Sigmoid colon (tissue), 7 donors: ENCODE measurements at regions of chr2 and their contacts with region 1.

Region 1: GRCh38 chr2:218781691-218782527 is at the start of gene CYP27A1:
- DNase-seq: peak; percentile 81
- H3K4me3 ChIP-seq: peak within 1 kb of the TSS; percentile 62 to 79 (median 72)
- H3K27ac ChIP-seq: peak within 1 kb of the TSS; percentile 79 to 84 (median 82)
- H3K4me1 ChIP-seq: peaks cover 0 to 27% (median 16%) of the 10 kb centered on the region in 4 donors
- H3K27me3 ChIP-seq: no peaks in the 10 kb centered on the region
- CTCF ChIP-seq: no peak
- EP300 ChIP-seq: no peak
- POLR2A ChIP-seq: peak in 1 of 2 donors; percentile 30
- total RNA-seq, gene CYP27A1: 21.9 to 30.1 (median 25.7) TPM

Region 2: DNA sequence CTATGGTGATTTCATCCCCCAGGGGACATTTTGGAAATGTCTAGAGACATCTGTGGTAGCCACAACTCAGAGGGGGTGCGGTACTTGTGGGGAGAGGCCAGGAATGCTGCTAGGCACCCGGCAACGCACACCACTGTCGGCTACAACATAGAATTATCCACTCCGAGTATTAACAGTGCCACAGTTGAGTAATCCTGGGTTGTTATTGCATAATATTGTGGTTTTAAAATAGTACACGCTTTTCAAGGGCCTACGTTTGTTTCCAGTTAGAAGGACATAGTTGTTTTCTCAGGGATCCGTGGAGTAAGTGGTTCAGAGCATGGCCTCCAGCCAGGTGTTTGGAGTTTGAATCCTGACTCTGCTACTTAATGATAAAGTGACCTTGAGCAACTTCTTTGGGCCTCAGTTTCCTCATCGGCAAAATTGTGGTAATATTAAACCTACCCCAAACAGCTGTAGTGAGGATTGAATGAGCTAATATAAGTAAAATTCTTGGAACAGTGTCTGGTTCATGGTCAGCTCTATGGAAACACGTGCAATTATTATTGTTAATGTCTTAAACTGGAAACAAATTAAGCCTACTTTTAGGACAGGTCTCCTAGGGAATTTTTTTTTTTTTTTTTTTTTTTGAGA is 24.6 kb after region 1 on chr2:
- intact Hi-C with region 1: loop called (anchors 2 kb)
- DNase-seq: peak; percentile 95
- H3K4me3 ChIP-seq: peak overlapping the region in 1 of 4 donors; percentile 2
- H3K27ac ChIP-seq: peak overlapping the region; percentile 71 to 86 (median 78)
- H3K4me1 ChIP-seq: peaks cover 0 to 27% (median 19%) of the 10 kb centered on the region in 4 donors
- H3K27me3 ChIP-seq: no peaks in the 10 kb centered on the region
- CTCF ChIP-seq: no peak
- EP300 ChIP-seq: peak; percentile 56 to 92 (median 72)
- POLR2A ChIP-seq: no peak